ENCODE measurements at regions of chr11 and their contacts with region 1.

Region 1: GRCh38 chr11:26297189-26297975 is 34.5 kb upstream of the ANO3 start:
- DNase-seq: no peak

Region 2: DNA sequence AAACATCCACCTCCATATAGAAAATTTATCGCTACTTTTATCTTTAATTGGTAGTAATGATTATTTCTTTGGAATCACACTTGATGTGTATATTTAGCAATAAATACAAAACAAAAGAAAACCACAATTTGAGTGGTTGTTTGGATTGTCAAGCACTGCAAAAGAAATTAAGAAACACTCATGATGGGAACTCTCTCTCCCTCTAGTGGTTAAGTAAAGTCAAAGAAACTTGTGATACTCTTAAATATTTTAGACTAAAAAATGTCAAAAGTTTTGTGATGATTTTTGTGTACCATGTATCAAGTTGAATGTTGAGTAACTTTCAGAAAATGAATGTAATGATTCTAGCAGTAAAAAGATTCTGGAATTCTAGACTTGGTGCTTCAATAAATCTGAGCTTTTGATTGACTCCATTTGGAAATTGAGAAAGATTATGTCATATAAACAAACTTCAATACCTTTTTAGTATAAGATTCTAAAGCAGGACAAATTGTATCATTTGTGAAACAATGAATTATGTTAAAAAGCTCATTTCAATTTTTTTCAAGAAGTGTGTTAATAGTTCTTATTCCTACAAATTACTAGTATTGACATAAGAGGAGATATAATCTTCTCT is 253.9 kb after region 1 on chr11:
- intact Hi-C with region 1: loop called (anchors 5 kb)
- DNase-seq: no peak

Region 3: GRCh38 chr11:26649884-26650283 is 352.5 kb after region 1 on chr11:
- intact Hi-C with region 1: loop called (anchors 5 kb)
- DNase-seq: peak in 4 of 10 donors; percentile 11 to 57 (median 20)

Region 4: DNA sequence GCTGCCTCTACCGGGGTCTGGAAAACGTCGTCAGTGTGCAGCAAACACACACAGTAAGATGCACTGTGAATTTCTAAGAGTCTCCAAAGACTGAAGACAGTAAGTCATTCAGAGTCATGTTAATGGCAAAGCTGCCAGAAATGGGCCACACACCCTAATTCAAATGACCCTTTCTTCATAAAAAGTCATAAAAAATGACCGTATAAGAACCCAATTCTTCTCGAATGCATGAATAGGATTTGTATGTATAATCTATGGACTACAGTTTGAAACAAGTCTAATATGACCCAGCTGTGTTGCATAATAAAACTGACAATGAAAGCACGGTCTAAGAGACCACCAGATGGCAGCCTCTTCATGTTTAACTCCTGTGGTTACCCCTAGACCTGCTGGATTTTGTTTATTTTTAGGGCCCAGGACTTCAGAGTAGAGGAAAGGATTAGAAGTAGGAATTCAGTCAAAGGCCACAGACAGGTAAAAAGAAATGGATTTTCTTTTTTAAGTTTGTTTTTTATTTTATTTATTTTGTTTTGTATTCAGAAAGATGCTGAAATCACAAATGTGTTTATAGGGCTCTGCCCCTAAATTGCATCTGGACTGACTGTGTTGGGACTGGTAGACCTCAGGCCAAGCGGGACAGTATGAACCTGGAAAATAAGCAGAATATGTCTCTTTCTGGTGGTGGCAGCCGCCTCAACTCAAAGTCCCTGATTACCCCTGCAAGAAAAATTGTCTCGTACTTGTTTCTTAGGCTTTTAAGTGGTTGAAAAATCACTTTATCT is 456.5 kb after region 1 on chr11:
- intact Hi-C with region 1: loop called (anchors 5 kb)
- DNase-seq: peak in 6 of 10 donors; percentile 27 to 59 (median 31)

Region 5: DNA sequence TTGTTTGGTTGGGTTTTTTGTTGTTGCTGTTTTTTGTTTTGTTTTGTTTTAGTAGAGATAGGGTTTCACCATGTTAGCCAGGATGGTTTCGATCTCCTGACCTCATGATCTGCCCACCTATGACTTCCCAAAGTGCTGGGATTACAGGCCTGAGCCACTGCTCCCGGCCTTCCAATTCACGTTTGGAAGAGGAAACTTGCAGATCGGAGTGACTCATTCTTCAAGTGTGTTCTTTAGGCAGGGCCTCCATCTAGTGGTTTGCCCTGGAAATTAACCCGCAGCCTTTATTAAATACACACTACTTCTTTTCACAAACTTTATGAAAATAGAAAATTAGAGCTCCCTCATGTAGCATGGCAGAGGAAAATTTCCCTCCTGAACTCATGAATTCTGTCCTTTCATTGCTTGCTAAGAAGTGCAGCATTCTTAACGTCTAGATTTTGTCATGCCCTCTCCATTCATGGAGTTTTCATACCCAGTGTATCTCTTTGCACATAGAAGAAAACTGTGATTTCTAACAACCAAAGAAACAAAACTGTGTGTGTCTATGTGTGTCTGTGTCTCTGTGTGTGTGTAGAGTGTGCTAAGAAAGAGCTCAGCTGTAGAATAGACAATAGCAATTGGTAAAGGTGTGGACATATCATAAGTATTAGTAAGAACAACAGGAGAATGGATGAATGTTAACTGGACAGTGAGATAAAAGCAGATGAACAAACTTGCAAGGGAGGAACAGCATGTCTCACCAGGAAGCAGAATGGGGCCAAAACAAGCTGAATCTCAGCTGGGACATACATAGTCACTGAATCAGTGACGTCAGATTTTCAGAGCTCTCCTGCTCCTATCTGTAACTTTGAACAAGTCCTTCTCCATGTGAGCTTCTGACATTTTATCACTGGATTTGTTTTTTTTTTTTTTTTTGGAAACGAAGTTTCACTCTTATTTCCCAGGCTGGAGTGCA is 861.6 kb after region 1 on chr11:
- intact Hi-C with region 1: loop called (anchors 5 kb)
- DNase-seq: peak in 6 of 10 donors; percentile 21 to 84 (median 49)